ENCODE measurements at regions of chr2 and their contacts with region 1.

Region 1: GRCh38 chr2:170973492-170974303 is 44.6 kb downstream of the GORASP2 start:
- DNase-seq: peak; percentile 85 to 87
- ATAC-seq: peak; percentile 85 to 94
- H3K4me3 ChIP-seq: peak overlapping the region; percentile 58
- H3K27ac ChIP-seq: peak overlapping the region; percentile 90 to 97
- H3K4me1 ChIP-seq: peaks cover 9% of the 10 kb centered on the region; the same call in 1 of the 3 replicates
- CTCF ChIP-seq: peak; percentile 97
- EP300 ChIP-seq: no peak
- POLR2A ChIP-seq: peak; percentile 63
- RAD21 ChIP-seq: peak; percentile 80 to 99

Region 2: GRCh38 chr2:170950221-170950761 is 23.4 kb before region 1 on chr2:
- CTCF ChIA-PET with region 1: interaction called, 10 read pairs
- POLR2A ChIA-PET with region 1: interaction called, 6 read pairs
- DNase-seq: no peak
- ATAC-seq: no peak
- H3K4me3 ChIP-seq: no peak overlapping the region
- H3K27ac ChIP-seq: no peak overlapping the region
- H3K4me1 ChIP-seq: no peaks in the 10 kb centered on the region
- CTCF ChIP-seq: no peak
- EP300 ChIP-seq: no peak
- POLR2A ChIP-seq: no peak
- RAD21 ChIP-seq: no peak

Region 3: GRCh38 chr2:171018522-171018921 is 44.8 kb after region 1 on chr2:
- CTCF ChIA-PET with region 1: no interaction called
- POLR2A ChIA-PET with region 1: no interaction called
- DNase-seq: no peak
- ATAC-seq: no peak
- H3K4me3 ChIP-seq: no peak overlapping the region
- H3K27ac ChIP-seq: no peak overlapping the region
- H3K4me1 ChIP-seq: peaks cover 17% of the 10 kb centered on the region
- CTCF ChIP-seq: no peak
- EP300 ChIP-seq: no peak
- POLR2A ChIP-seq: no peak
- RAD21 ChIP-seq: no peak

Region 4: DNA sequence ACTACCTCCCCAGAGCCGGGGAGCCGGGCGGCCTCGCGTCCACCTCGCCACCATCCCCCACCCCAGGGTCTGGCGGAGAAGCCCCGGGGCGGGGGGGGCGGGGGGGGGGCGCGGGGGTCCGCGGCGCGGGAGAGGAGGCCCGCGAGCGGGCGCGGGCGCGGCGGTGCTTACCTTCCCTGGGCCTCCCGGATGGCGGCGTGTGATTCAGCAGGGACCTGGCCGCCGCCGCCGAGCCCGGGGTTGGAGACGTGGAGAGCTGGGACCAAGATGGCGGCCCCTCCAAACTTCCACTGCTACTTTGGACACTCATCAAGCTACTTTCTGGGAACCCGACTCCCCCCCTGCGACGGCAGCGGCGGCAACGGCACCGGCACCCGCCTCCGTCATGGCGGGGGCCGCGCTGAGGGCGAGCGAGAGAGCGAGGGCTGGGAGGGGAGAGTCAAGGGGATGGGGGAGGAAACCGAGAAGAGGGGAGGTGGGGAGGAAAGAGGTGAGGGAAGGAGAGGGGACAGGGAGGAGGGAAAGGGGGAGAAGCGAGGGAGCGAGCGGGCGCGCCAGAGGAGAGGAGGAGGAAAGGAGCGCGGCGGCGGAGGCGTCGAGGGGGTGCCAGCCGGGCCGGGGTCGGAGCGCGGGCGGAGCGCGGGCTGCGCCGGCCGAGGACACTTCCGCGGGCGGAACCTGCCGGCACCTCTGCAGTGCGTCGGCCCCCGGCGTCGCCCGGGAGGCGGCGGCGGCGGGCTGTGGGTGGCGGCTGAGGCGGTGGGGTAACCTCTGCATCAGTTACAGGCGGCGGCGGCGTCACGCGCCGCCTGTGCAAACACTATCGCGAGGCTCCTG is 186.6 kb after region 1 on chr2 and contains the start of gene TLK1:
- CTCF ChIA-PET with region 1: interaction called, 19 read pairs
- POLR2A ChIA-PET with region 1: interaction called, 4 read pairs
- DNase-seq: peak; percentile 30 to 74
- ATAC-seq: peak; percentile 81
- H3K4me3 ChIP-seq: peak within 1 kb of the TSS; percentile 91
- H3K27ac ChIP-seq: peak within 1 kb of the TSS; percentile 98 to 99
- H3K4me1 ChIP-seq: peaks cover 19% of the 10 kb centered on the region
- CTCF ChIP-seq: no peak
- EP300 ChIP-seq: no peak
- POLR2A ChIP-seq: peak; percentile 53
- RAD21 ChIP-seq: no peak; a peak in 1 of 5 replicates
- polyA plus RNA-seq, gene TLK1: 28.9 and 29.8 TPM in 2 replicates

Region 5: DNA sequence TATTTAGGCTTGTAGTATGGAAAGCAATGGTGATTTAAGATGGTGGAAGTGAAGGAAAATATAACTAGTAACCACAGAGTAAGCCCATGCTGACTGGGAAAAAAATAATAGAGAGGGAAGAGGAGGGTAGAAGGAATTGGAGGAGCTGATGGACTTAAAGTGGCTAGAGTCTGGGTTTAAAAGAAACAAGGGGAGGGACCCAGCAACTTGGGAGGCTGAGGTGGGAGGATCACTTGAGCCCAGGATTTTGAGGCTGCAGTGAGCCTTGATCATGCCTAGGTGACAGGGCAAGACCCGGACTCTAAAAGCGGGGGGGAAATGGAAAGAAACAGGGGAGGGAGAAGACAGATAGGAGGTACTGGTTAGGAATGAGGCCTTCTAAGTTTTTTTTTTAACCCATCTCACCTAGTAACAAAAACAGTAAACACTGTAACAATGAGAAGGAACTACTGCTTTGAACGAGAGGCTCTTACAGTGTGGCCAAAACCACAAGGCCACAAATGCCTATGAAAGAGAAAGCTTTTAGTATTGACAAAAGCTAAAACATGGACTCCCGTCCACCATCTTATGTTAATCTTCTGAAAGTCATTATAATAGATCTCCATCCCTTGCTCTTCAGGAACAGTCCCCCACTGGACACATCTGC is 433.5 kb after region 1 on chr2:
- CTCF ChIA-PET with region 1: interaction called, 10 read pairs
- POLR2A ChIA-PET with region 1: no interaction called
- DNase-seq: no peak
- ATAC-seq: no peak
- H3K4me3 ChIP-seq: no peak overlapping the region
- H3K27ac ChIP-seq: no peak overlapping the region
- H3K4me1 ChIP-seq: peaks cover 20% of the 10 kb centered on the region; the same call in 1 of the 3 replicates
- CTCF ChIP-seq: no peak
- EP300 ChIP-seq: no peak
- POLR2A ChIP-seq: no peak
- RAD21 ChIP-seq: no peak

Region 6: GRCh38 chr2:171416009-171416926 is 442.6 kb after region 1 on chr2:
- CTCF ChIA-PET with region 1: interaction called, 35 read pairs
- POLR2A ChIA-PET with region 1: interaction called, 12 read pairs
- DNase-seq: peak; percentile 74 to 94
- ATAC-seq: peak; percentile 100
- H3K4me3 ChIP-seq: no peak overlapping the region
- H3K27ac ChIP-seq: peak overlapping the region in 1 of 2 experiments; percentile 44; a peak in 3 of 6 replicates
- H3K4me1 ChIP-seq: peaks cover 10% of the 10 kb centered on the region; the same call in 2 of the 3 replicates
- CTCF ChIP-seq: peak; percentile 93
- EP300 ChIP-seq: no peak
- POLR2A ChIP-seq: no peak
- RAD21 ChIP-seq: peak; percentile 91 to 93